Left ventricle myocardium superior (tissue), 1 donor: ENCODE measurements at regions of chr2 and their contacts with region 1.

Region 1: DNA sequence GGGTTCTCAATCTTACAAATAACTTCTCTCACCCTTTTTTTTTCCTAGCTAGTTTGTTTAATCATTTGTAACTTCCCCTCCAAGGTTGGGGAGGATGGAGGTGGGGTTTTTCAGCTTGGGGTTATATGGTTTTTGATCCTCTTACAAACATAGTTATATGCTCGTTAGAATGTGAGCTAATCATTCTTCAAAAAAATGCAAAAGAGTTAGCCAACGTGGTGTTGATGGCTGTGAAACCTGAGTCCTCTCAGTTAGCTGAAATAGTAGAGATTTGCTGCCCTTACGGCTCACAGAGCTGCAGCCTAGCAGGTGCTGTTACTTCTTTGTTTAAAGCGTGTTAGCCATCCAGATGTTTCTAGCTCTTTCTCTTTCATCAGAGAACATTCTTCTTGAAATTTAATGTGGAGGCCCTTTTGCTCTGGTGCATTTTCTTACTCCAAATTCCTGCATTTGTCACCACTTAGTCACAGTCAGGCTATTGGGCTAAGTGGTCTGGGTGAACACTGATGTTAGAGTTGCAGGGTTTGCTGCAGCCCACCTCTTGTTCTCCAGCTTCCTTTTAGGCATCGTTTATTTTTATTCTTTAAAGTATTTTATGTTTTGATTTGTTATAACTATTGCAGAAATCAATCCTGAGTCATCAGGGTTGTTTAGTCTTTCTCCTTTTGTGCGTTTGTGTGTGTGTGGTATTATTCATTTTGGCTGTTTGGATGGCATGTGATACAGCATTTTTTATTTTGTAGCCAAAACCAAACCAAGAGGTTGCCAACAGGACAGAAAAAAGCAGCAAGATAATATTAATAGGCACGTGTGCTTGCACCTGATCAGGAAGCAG is 41.1 kb downstream of the LIMS1 start:
- DNase-seq: no peak
- ATAC-seq: no peak

Region 2: DNA sequence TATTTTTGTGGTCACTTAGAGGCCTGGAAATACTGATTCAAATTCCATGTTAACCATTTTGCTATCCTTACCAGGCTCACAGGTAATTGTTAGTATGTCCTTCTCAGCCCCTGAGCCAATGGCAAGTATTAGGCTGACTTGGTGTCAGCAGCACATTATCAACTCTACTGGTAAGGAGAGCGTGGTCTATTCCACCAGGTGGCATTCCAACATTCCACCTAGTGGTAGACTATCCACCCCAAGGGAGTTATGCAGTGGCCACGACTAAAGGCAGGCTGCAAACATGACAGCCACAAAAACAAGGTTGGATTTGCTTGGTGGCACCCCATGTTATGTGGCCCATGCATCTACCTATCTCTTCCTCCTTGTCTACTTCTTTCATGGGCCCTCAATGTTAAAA is 158.1 kb before region 1 on chr2:
- intact Hi-C with region 1: no loop called
- DNase-seq: no peak
- ATAC-seq: no peak

Region 3: DNA sequence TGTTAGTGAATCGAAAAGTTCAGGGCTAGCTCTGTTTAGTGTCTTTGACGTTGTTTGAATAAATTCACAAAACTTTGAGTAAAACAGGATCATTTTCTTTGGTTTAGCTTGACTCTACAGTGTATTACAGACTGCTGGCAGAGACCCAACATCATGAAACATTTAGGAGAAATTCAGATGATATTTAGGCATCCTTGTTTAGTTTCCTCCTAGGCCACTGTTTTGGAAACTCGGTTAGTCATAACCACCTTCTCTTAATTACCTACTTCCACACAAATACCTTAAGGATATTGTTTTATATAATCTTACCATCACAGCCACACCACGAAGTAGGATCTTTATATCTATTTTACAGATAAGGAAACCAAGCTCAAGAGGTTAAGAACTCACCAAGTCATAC is 33.3 kb before region 1 on chr2:
- intact Hi-C with region 1: loop called (anchors 5 kb)
- DNase-seq: no peak
- ATAC-seq: no peak